Psoas muscle (tissue), 8 donors: ENCODE measurements at regions of chr1 and their contacts with region 1.

Region 1: GRCh38 chr1:154479764-154480421 is 22.1 kb upstream of the TDRD10 start:
- DNase-seq: no peak
- ATAC-seq: peak; percentile 80 to 95 (median 88)
- H3K4me3 ChIP-seq: no peak overlapping the region
- H3K27ac ChIP-seq: no peak overlapping the region
- H3K4me1 ChIP-seq: peaks cover 5% of the 10 kb centered on the region
- H3K27me3 ChIP-seq: no peaks in the 10 kb centered on the region
- CTCF ChIP-seq: peak; percentile 93

Region 2: DNA sequence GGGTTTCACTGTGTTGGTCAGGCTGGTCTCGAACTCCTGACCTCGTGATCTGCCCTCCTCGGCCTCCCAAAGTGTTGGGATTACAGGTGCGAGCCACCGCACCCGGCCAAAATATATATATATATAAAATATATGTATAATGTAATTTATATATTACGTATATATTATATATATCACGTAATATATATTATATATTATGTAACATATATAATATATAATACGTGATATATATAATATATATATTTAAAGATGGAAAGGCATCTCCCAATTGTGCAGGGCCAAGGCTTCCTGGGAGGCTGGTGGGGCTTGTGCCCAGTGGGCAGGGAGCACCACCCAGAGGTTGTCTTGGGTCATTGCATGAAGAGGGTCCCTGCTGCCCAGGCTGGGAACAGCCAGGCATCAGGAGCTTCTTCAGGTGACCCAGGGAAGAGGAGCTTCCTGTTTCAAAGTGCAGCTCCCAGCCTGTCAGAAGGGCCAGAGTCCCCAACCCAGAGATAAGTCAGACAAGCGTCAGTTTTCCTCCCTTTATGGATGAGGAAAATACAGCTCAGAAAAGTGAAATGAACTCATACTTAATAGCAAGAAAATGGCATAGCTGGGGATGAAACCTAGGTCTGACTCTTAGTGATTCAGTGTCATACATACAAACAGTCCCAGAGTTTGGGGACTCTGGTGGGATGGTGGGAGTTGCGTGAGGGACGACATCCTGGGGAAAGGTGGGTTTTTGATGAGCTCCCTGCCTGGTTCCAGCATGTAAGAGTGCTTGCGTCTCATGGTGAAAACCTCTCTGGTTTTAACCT is 66.6 kb after region 1 on chr1:
- intact Hi-C with region 1: loop called (anchors 1 to 2 kb)
- DNase-seq: peak; percentile 44 to 57
- ATAC-seq: peak; percentile 76 to 89 (median 86)
- H3K4me3 ChIP-seq: no peak overlapping the region
- H3K27ac ChIP-seq: no peak overlapping the region
- H3K4me1 ChIP-seq: no peaks in the 10 kb centered on the region
- H3K27me3 ChIP-seq: peaks cover 0 to 3% (median 0%) of the 10 kb centered on the region in 3 donors
- CTCF ChIP-seq: peak; percentile 82

Region 3: DNA sequence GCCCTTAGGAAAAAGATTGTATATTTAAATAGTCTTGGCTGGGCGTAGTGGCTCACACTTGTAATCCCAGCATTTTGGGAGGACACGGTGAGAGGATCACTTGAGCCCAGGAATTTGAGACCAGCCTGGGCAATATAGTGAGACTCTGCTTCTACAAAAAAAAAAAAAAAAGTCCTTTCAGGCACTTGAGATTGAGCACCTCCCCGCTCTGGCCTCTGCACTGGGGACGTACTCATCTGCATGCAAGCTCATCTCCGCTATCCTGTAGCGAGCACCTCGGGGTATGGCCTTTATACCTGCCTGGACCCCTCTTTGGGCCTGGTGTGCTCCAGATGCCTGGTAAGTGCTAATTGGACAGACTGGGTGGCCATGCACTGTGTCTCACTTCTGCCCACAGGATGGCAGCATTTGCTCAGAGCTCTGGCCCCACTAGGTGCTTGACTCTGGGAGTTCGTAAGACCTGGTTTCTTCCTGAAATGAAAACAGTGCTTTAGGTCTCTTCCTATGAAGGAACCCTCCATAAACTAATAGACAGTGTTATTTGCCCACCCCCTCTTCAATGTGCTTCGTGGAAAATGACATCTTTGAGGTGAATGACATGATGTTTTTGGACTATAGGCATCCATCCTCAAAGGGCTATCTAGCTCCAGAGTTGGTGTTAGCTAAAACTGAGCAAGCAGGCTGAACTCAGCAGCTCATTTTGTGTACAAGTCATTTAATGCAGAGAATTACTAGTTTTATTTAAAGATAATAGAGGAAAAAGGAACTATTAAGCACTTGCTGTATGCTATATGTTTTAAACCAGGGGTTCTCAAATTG is 189.8 kb after region 1 on chr1:
- intact Hi-C with region 1: loop called in 1 of 2 experiments (anchors 10 kb)
- DNase-seq: peak; percentile 66 to 84
- ATAC-seq: peak; percentile 98 to 100 (median 100)
- H3K4me3 ChIP-seq: no peak overlapping the region
- H3K27ac ChIP-seq: no peak overlapping the region
- H3K4me1 ChIP-seq: no peaks in the 10 kb centered on the region
- H3K27me3 ChIP-seq: no peaks in the 10 kb centered on the region
- CTCF ChIP-seq: peak; percentile 86

Region 4: DNA sequence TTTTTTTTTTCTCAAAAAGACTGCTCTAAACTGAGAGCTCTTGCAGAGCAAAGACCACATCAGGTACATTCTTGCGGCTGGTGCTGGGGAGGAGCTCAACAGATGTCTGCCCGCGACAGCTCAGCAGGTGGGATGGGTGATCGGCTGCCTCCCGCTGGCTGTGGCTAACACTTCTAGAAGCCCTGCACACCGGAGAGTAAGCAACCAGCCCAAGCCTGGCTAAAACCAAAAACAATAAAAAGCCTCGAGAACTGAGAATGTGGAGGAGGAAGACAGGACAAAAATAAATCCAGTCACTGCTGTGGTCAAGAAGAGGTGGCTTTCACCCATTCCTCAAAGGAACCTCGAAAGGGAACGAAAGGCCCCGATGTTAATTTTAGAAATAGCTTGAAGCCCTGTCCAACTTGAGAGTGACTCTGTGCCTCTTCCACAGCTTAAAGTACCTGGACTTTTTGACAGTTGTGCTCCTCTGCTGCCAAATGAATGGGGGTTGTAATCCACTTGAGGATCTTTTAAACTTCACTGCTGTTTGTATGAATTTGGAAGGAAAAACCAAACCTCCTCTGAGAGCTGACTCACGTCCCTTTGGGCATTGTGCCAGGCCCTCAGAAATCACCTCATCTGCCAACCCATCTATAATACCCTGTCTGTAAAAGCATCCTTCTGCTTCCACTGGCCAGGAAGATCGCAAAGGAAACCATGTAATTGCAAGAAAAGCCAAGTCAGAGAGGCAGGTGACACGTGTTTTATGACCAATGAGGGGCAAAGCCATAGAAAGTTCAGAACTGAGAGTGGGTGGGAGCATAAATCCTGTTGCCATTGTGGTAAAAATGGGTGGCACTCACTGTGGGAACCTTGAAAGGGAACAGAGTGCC is 311.6 kb after region 1 on chr1:
- intact Hi-C with region 1: no loop called
- DNase-seq: peak; percentile 34 to 60
- ATAC-seq: peak; percentile 34 to 71 (median 53)
- H3K4me3 ChIP-seq: no peak overlapping the region
- H3K27ac ChIP-seq: peak overlapping the region; percentile 23
- H3K4me1 ChIP-seq: peaks cover 13% of the 10 kb centered on the region
- H3K27me3 ChIP-seq: no peaks in the 10 kb centered on the region
- CTCF ChIP-seq: no peak